ENCODE measurements at regions of chr14 and their contacts with region 1.

Region 1: GRCh38 chr14:22505697-22506377 is 83.2 kb downstream of the DAD1 start:
- DNase-seq: peak; percentile 51
- ATAC-seq: peak; percentile 34
- H3K4me3 Mint-ChIP-seq: peak overlapping the region; percentile 84
- H3K27ac Mint-ChIP-seq: peak overlapping the region; percentile 98
- H3K4me1 Mint-ChIP-seq: peaks cover 33% of the 10 kb centered on the region
- H3K27me3 Mint-ChIP-seq: no peaks in the 10 kb centered on the region

Region 2: DNA sequence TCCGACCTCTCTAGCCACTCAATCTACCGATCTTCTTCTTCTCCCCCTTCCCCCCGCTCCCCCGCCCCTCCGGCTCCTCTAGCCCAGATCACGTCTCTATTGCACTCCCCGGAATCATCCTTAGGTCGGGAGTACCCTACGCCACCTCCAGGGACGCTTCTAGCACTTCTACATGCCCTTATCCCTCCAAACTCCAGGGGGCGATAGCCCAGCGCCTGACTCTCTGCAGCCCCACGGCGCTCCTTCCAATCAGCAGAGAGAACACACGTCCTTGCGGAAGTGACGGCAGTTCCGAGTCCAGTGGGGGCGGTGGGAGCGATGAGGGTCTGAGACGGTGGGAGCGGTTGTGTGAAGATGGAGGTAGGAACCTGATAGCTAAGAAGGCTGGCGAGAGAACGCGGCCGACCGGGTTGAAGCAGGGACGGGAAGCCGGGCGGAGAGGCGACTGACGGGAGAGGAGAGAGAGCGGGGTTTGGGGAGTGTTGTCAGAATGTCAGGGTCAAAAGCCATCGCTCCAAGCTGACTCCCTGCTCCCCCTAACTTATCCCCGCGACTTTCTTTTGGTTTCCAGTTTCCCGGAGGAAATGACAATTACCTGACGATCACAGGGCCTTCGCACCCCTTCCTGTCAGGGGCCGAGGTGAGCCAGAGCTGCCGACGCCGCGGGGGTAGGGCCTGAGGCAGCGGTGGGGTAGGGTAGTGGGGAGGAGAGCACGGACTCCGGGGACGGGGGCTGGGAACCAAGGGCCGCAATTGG is 1028.7 kb before region 1 on chr14 and contains the starts of genes RAB2B and TOX4:
- CTCF ChIA-PET with region 1: no interaction called
- POLR2A ChIA-PET with region 1: no interaction called
- intact Hi-C with region 1: loop called in 1 of 2 experiments (anchors 2 kb)
- DNase-seq: peak; percentile 96
- ATAC-seq: peak; percentile 98
- H3K4me3 Mint-ChIP-seq: peak within 1 kb of the TSS; percentile 99
- H3K27ac Mint-ChIP-seq: peak within 1 kb of the TSS; percentile 100
- H3K4me1 Mint-ChIP-seq: peaks cover 22% of the 10 kb centered on the region
- H3K27me3 Mint-ChIP-seq: no peaks in the 10 kb centered on the region
- total RNA-seq, gene RAB2B: 21.2 to 22.0 TPM
- total RNA-seq, gene TOX4: 79.5 to 85.6 TPM

Region 3: DNA sequence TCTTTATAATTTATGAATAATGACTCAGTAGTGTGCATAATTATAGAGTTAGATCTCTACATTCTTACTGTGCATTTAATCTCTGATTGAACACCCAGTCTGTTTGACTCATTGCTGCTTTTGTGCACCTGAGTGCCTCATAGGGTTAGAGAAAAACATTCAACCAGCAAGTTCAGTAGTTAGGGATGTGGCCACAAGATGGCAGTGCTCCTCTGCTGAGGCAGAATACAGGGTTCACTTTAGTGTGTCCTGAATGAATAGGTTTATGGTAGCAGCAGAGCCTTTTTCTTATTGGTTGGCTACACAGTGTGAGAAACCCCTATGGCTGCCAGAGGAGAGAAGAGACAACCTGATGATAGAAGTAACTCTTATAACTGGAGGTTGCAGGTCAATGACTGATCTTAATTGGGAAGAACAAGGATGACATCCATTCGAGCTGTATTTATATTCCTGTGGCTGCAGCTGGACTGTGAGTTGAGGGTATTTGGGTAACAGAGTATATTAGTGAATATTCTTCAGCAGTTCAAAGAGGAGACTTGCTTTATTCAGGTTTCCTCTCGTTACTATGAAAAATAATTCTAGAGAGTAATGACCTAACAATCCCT is 637.3 kb before region 1 on chr14:
- CTCF ChIA-PET with region 1: no interaction called
- POLR2A ChIA-PET with region 1: no interaction called
- intact Hi-C with region 1: loop called in 1 of 2 experiments (anchors 5 kb)
- DNase-seq: peak; percentile 90
- ATAC-seq: peak; percentile 92
- H3K4me3 Mint-ChIP-seq: peak overlapping the region; percentile 65
- H3K27ac Mint-ChIP-seq: peak overlapping the region; percentile 65
- H3K4me1 Mint-ChIP-seq: peaks cover 34% of the 10 kb centered on the region
- H3K27me3 Mint-ChIP-seq: no peaks in the 10 kb centered on the region

Region 4: DNA sequence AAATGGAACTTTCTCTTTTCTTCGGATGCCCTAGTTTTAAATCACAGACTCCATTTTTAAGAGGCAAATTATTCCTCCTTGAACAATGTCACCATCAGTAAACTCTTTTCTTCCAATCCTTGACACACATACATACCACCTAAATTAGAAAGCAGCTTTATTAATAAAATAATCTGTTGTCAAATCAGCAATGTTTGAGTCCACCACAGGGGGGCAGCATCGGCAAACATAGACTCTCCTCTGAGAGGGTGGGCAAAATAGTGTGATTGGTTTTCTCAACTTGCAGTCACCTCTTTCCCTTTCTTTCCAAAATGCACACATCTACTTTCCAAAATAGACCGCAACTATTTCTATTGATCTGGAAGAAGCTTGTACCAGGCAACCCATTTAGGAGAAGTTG is 393.8 kb before region 1 on chr14:
- CTCF ChIA-PET with region 1: no interaction called
- POLR2A ChIA-PET with region 1: no interaction called
- intact Hi-C with region 1: loop called in 1 of 2 experiments (anchors 10 kb)
- DNase-seq: peak; percentile 67
- ATAC-seq: no peak
- H3K4me3 Mint-ChIP-seq: peak overlapping the region; percentile 71
- H3K27ac Mint-ChIP-seq: peak overlapping the region; percentile 88
- H3K4me1 Mint-ChIP-seq: peaks cover 22% of the 10 kb centered on the region
- H3K27me3 Mint-ChIP-seq: no peaks in the 10 kb centered on the region

Region 5: DNA sequence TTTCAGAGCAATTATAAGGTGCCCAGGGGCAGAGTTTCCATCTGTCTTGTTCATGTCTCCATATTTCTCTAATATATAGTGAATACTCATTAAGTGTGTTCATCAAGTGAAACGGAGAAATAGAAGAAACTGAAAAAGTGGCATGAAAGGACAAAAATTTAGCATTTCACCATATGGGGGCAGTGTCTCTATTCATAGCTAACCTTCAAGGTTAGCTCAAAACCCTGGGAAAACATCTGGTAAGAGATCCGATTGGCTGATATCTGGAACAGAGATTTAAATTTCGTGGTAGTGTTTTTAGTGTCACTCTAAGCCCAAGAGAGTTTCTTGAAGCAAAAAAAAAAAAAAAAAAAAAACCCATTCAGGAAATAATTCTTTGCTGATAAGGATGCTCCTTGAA is 284.3 kb before region 1 on chr14:
- CTCF ChIA-PET with region 1: no interaction called
- POLR2A ChIA-PET with region 1: no interaction called
- intact Hi-C with region 1: loop called (anchors 5 to 10 kb)
- DNase-seq: no peak
- ATAC-seq: no peak
- H3K4me3 Mint-ChIP-seq: peak overlapping the region; percentile 58
- H3K27ac Mint-ChIP-seq: peak overlapping the region; percentile 51
- H3K4me1 Mint-ChIP-seq: peaks cover 14% of the 10 kb centered on the region
- H3K27me3 Mint-ChIP-seq: no peaks in the 10 kb centered on the region

Region 6: GRCh38 chr14:22531451-22532344 is 25.9 kb after region 1 on chr14:
- CTCF ChIA-PET with region 1: interaction called, 9 read pairs
- POLR2A ChIA-PET with region 1: interaction called, 10 read pairs
- intact Hi-C with region 1: loop called in 1 of 2 experiments (anchors 2 kb)
- DNase-seq: peak; percentile 60
- ATAC-seq: peak; percentile 70
- H3K4me3 Mint-ChIP-seq: peak overlapping the region; percentile 84
- H3K27ac Mint-ChIP-seq: peak overlapping the region; percentile 100
- H3K4me1 Mint-ChIP-seq: peaks cover 87% of the 10 kb centered on the region
- H3K27me3 Mint-ChIP-seq: no peaks in the 10 kb centered on the region

Region 7: DNA sequence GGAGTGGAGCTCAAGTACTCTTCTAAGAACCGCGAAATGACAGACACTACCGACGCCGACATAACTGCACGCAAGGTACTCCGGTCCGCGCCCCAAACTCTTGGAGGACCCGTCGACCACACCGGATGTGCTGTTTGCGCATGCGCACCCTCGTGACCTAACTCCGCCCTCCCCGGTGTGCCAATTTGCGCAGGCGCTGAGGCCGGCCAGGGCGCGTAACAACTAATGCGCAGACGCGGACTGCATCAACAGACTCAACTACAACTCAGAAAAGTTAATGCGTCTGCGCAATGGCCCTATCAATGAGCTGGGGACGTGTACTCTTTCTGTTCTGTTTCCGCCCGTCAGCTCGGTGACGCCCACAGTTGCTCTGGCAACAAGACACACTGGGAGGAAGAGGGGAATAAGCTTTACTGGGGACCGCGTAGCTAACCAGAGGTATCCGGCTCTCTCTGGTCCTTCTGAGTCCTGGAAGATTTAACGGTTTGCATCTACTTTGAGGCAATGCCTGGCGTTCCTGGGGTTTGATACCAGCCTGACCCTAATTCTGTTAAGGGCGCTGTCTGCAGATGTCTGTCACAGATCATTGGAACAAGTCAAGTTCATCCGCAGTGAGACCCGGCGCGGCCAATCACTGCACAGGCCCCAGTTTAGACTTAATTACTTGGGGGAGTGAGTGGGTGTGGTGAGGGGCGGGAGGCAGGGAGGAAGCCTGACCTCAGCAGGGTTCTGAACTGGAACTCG is 83.4 kb after region 1 on chr14 and contains the start of gene DAD1:
- CTCF ChIA-PET with region 1: interaction called, 3 read pairs
- POLR2A ChIA-PET with region 1: interaction called, 13 read pairs
- intact Hi-C with region 1: loop called (anchors 1 kb)
- DNase-seq: peak; percentile 100
- ATAC-seq: peak; percentile 84
- H3K4me3 Mint-ChIP-seq: peak within 1 kb of the TSS; percentile 93
- H3K27ac Mint-ChIP-seq: peak within 1 kb of the TSS; percentile 97
- H3K4me1 Mint-ChIP-seq: peaks cover 72% of the 10 kb centered on the region
- H3K27me3 Mint-ChIP-seq: peaks cover 1% of the 10 kb centered on the region
- total RNA-seq, gene DAD1: 265 to 302 TPM

Measured in activated CD4-positive, alpha-beta T cell treated with anti-CD3 and anti-CD28 coated beads for 36 hours (primary cell).